Activated CD4-positive, alpha-beta T cell treated with anti-CD3 and anti-CD28 coated beads, Interleukin-2, amount 10 ng/mL, durations not matched to agents 7 days and 5 days (primary cell): ENCODE measurements at regions of chr1 and their contacts with region 1.

Region 1: GRCh38 chr1:155172732-155173477 is at the start of gene KRTCAP2:
- DNase-seq: peak; percentile 96
- H3K4me3 Mint-ChIP-seq: peak within 1 kb of the TSS; percentile 96
- H3K27ac Mint-ChIP-seq: peak within 1 kb of the TSS; percentile 96
- H3K4me1 Mint-ChIP-seq: peaks cover 58% of the 10 kb centered on the region
- H3K27me3 Mint-ChIP-seq: no peaks in the 10 kb centered on the region
- total RNA-seq, gene KRTCAP2: 183 to 308 TPM

Region 2: GRCh38 chr1:155091071-155091709 is 81.7 kb before region 1 on chr1:
- CTCF ChIA-PET with region 1: interaction called, 67 read pairs
- POLR2A ChIA-PET with region 1: no interaction called
- DNase-seq: peak; percentile 84
- H3K4me3 Mint-ChIP-seq: no peak overlapping the region
- H3K27ac Mint-ChIP-seq: no peak overlapping the region
- H3K4me1 Mint-ChIP-seq: peaks cover 10% of the 10 kb centered on the region
- H3K27me3 Mint-ChIP-seq: peaks cover 17% of the 10 kb centered on the region

Region 3: DNA sequence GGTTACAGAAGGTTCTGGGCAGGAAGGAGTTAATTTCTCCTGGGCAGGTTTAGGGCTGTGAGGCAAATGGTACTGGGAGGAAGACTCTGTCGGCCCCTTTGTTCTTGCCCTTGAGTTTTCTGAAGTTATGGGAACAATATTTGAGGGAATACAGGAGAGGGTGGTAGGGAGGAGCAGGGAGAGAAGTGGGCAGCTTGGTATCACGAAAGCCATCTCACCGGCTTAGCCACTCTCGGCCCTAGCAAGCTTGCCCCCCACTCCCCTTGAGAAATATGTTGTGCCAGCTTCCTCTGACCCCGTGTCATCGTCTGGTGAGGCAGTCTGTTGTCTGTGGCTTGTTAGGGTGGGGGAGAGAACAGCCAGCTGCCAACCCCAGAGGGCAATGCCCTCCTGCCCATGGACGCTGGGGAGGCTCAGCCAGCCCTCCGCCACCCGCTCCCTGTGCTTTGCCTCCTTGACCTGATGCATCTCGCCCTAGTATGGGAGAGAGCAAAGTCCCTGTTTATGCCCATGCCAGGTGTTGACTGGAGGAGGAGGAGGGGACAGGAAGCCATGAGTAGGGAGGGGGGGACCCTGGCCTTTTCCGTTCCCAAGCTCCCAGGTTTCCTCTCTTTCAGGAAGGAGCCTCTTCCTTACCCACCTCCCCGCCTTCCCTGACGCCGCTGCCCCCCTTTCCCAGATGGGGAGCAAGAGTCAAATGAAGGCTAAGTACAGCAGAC is 44.0 kb before region 1 on chr1:
- CTCF ChIA-PET with region 1: interaction called, 10 read pairs
- POLR2A ChIA-PET with region 1: no interaction called
- DNase-seq: no peak
- H3K4me3 Mint-ChIP-seq: peak overlapping the region; percentile 60
- H3K27ac Mint-ChIP-seq: peak overlapping the region; percentile 16
- H3K4me1 Mint-ChIP-seq: peaks cover 42% of the 10 kb centered on the region
- H3K27me3 Mint-ChIP-seq: peaks cover 42% of the 10 kb centered on the region

Region 4: GRCh38 chr1:155145491-155145890 is 27.4 kb before region 1 on chr1:
- CTCF ChIA-PET with region 1: interaction called, 16 read pairs
- POLR2A ChIA-PET with region 1: no interaction called
- DNase-seq: no peak
- H3K4me3 Mint-ChIP-seq: no peak overlapping the region
- H3K27ac Mint-ChIP-seq: no peak overlapping the region
- H3K4me1 Mint-ChIP-seq: peaks cover 11% of the 10 kb centered on the region
- H3K27me3 Mint-ChIP-seq: peaks cover 23% of the 10 kb centered on the region

Region 5: DNA sequence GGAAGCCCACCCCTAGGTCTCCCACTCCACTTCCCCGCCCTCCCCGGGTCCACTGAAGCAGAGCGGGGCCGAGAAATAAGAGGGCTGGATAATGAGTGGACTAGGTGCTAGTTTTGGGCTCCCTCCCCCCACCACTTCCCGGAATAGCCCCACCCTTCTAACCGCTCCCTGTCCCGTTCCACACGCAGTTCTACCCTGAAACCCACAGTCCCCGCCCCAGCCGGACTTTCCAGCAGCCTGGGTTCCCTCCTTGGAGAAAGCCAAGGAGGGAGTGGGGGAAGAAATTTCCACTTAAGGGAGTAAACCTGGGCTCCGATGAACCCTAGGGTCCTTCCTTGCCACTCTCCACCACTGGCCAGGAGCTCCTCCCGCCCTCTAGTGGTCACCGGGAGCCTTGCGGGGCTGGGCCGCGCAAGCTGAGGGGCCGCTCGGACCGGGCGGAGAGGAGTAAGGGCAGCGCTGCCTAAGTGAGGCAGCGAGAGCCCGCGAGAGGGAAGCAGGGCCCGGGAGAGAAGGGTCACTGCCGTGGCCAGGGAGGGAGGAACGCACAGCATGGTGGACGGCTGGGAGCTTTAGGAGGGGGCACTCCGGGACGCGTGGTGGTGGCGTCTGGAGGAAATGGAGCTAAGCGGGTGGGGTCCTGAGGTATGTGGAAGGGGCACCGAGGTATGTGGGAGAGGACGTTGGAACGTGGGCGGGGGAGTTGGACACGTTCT is 20.5 kb after region 1 on chr1:
- CTCF ChIA-PET with region 1: interaction called, 52 read pairs
- POLR2A ChIA-PET with region 1: no interaction called
- DNase-seq: peak; percentile 77
- H3K4me3 Mint-ChIP-seq: peak overlapping the region; percentile 74
- H3K27ac Mint-ChIP-seq: peak overlapping the region; percentile 96
- H3K4me1 Mint-ChIP-seq: peaks cover 38% of the 10 kb centered on the region
- H3K27me3 Mint-ChIP-seq: no peaks in the 10 kb centered on the region

Region 6: GRCh38 chr1:156445789-156446263 is 1272.9 kb after region 1 on chr1:
- CTCF ChIA-PET with region 1: no interaction called
- POLR2A ChIA-PET with region 1: no interaction called
- DNase-seq: peak; percentile 79
- H3K4me3 Mint-ChIP-seq: no peak overlapping the region
- H3K27ac Mint-ChIP-seq: no peak overlapping the region
- H3K4me1 Mint-ChIP-seq: peaks cover 8% of the 10 kb centered on the region
- H3K27me3 Mint-ChIP-seq: peaks cover 61% of the 10 kb centered on the region